Activated CD4-positive, alpha-beta T cell treated with anti-CD3 and anti-CD28 coated beads for 36 hours (primary cell): ENCODE measurements at regions of chrX and their contacts with region 1.

Region 1: DNA sequence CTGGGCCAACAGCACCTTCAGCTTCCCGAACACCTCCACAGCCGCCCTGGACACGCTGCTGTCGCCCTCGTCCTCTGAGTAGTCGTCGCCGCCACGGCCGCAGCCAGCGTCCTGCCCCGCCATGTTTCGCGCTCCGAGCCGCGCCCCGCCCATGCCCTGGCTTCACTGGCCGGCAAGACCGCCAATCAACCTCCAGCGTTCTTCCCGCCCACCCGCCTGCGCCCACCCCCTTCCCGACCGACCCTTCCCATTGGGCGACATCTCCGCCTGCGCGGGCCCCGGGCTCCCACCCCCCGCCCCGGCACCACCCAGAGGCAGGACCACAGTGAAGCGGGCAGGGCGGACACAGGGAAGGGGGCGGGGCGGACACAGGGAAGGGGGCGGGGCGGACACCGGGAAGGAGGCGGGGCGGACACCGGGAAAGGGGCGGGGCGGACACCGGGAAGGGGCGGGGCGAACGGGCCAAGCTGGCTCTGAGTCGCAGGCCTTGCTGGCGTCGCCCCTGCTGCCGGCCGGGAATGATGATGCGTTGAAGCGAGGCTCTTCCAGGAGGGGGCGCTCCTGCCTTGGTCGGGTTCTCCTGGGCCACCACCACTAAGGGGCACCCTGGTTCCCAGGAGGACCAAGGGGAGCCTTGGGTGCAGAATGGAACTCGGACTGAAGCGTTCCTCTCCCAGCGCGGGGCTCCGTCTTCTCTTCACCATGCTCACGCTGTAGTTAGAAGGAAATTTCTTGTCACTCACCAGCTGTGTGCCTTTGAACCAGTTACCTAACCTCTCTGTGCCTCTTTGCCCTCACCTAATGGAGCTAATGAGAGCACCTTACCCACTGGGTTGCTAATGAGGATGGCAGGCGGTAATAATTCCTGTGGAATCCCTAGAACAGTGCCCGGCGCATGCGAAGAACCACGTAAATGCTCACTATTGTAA is at the start of gene HAUS7:
- DNase-seq: peak; percentile 93
- ATAC-seq: peak; percentile 91
- H3K4me3 Mint-ChIP-seq: peak within 1 kb of the TSS; percentile 78
- H3K27ac Mint-ChIP-seq: peak within 1 kb of the TSS; percentile 67
- H3K4me1 Mint-ChIP-seq: peaks cover 5% of the 10 kb centered on the region
- H3K27me3 Mint-ChIP-seq: no peaks in the 10 kb centered on the region
- total RNA-seq, gene HAUS7: 41.9 to 70.0 TPM

Region 2: DNA sequence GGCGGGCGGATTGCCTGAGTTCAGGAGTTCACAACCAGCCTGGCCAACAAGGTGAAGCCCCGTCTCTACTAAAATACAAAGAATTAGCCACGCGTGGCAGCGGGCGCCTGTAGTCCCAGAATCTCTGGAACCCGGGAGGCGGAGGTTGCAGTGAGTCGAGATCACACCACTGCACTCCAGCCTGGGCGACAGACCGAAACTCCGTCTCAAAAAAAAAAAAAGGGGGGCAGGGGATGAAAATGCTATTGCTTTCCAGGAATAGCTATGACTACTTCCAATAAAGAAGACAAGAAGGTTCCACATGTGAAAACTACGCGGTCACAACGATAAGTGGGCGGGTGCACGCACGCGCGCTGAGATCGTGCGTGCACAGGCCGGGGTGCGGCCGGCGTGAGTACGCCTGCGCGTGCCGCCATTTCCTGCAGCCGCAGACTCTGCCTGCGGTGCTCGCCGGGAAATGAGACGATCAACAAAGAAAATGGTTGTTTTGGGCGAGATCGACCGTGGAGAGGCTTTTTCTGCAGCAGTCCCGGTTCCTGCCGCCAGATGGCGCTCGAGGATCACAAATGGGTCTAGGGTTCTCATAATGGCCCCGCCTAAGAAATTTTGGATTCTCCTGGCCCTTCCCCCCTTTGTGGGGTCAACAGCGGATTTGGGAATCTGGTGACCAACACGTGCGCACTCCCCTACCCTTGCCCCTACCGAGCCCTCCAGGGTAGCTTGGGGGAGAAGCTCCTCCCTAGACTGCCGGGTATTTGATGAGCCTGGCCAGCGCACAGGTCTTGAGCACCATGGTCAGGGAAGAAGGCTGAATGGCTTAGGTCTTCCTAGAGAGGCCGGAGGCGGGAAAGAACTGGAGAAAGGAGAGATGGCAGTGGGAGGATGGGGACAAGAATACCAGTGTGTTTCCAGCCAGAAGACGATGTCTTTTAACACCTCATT is 511.9 kb before region 1 on chrX:
- CTCF ChIA-PET with region 1: no interaction called
- POLR2A ChIA-PET with region 1: no interaction called
- intact Hi-C with region 1: loop called in 1 of 2 experiments (anchors 1 kb)
- DNase-seq: peak; percentile 91
- ATAC-seq: peak; percentile 98
- H3K4me3 Mint-ChIP-seq: peak overlapping the region; percentile 52
- H3K27ac Mint-ChIP-seq: peak overlapping the region; percentile 91
- H3K4me1 Mint-ChIP-seq: peaks cover 6% of the 10 kb centered on the region
- H3K27me3 Mint-ChIP-seq: no peaks in the 10 kb centered on the region

Region 3: DNA sequence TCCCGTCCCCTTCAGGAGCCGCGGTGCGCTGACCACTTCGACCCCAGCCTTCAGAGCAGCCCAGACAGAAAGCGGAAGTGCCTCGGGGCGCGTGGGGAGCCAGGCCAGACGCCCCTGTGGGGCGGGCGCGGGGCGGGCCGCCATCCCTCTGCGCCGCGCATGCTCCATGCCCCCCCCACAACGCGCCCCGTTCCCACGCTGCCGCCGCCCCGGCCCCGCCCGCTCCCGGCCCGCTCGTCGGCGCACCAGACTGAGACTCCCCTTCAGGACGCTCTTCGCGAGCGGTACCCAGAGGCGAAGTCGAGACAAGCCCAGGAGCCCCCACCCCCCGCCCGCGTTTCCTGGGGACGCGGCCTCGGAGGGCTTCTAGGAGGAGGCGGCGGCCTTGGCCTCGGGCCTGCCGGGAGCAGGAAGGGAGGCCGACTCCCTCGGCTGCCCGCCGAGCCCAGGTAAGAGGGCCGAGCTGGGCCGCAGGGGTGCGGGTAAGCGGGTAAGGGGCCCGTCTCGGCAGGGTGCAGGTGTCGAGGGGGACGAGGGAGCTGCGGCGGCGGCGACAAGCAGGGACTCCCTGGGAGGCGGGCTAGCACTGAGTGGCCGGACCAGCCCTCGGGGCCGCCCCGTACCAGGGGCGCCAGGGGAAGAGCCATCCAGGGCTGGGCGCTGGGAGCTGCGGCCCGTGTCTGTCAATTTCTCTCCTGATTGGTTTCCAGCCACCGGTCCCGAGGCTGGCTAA is 59.3 kb before region 1 on chrX and contains the start of gene ZFP92:
- CTCF ChIA-PET with region 1: no interaction called
- POLR2A ChIA-PET with region 1: no interaction called
- intact Hi-C with region 1: loop called in 1 of 2 experiments (anchors 2 kb)
- DNase-seq: peak; percentile 42
- ATAC-seq: peak; percentile 68
- H3K4me3 Mint-ChIP-seq: peak within 1 kb of the TSS; percentile 64
- H3K27ac Mint-ChIP-seq: no peak within 1 kb of the TSS
- H3K4me1 Mint-ChIP-seq: peaks cover 7% of the 10 kb centered on the region
- H3K27me3 Mint-ChIP-seq: no peaks in the 10 kb centered on the region
- total RNA-seq, gene ZFP92: 0.98 TPM

Region 4: GRCh38 chrX:153599192-153600031 is 128.7 kb after region 1 on chrX:
- CTCF ChIA-PET with region 1: no interaction called
- POLR2A ChIA-PET with region 1: no interaction called
- intact Hi-C with region 1: loop called in 1 of 2 experiments (anchors 1 kb)
- DNase-seq: peak; percentile 92
- ATAC-seq: peak; percentile 94
- H3K4me3 Mint-ChIP-seq: peak overlapping the region; percentile 81
- H3K27ac Mint-ChIP-seq: peak overlapping the region; percentile 72
- H3K4me1 Mint-ChIP-seq: peaks cover 35% of the 10 kb centered on the region
- H3K27me3 Mint-ChIP-seq: no peaks in the 10 kb centered on the region

Region 5: GRCh38 chrX:155070975-155071693 is 1600.4 kb after region 1 on chrX and contains the starts of genes BRCC3, CMC4 and MTCP1:
- CTCF ChIA-PET with region 1: no interaction called
- POLR2A ChIA-PET with region 1: no interaction called
- intact Hi-C with region 1: loop called in 1 of 2 experiments (anchors 5 kb)
- DNase-seq: peak; percentile 87
- ATAC-seq: peak; percentile 93
- H3K4me3 Mint-ChIP-seq: peak within 1 kb of the TSS; percentile 90
- H3K27ac Mint-ChIP-seq: peak within 1 kb of the TSS; percentile 93
- H3K4me1 Mint-ChIP-seq: peaks cover 53% of the 10 kb centered on the region
- H3K27me3 Mint-ChIP-seq: no peaks in the 10 kb centered on the region
- total RNA-seq, gene BRCC3: 28.1 to 30.3 TPM
- total RNA-seq, gene CMC4: 3.8 to 7.6 TPM
- total RNA-seq, gene MTCP1: 9.3 to 18.1 TPM